MCF 10A (cell line): ENCODE measurements at regions of chr21 and their contacts with region 1.

Region 1: DNA sequence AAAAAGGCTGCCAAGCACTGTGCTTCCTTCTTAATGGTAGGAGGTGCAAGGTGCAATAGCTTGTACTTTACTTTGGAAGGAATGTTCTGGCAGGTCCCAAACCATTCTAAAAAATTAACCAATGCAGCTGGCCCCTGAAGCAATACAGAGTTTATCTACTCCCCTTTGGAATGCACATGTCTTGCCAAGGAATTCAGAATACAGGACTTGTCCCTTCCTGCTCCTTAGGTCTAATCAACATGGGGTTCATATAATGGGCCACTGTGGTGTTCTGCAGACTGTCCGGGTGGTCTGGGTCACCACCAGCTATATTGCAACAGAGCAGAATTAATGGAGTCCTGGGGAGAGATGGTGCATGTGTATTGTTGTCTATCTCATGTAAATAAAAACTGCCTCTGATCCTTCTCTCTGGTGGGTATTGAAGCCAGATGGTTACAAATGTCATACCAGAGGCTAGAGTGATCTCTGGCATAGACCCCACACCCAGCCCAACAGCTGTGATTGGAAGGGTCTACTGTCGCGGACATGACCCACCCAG is 112.8 kb downstream of the RIPK4 start:
- DNase-seq: peak; percentile 74
- H3K4me3 Mint-ChIP-seq: peak overlapping the region; percentile 39
- H3K27ac Mint-ChIP-seq: peak overlapping the region; percentile 64
- H3K4me1 Mint-ChIP-seq: peaks cover 37% of the 10 kb centered on the region
- H3K27me3 Mint-ChIP-seq: no peaks in the 10 kb centered on the region
- CTCF ChIP-seq: no peak

Region 2: GRCh38 chr21:41345934-41346685 is 307.9 kb before region 1 on chr21:
- CTCF ChIA-PET with region 1: no interaction called
- POLR2A ChIA-PET with region 1: no interaction called
- intact Hi-C with region 1: no loop called
- DNase-seq: no peak
- H3K4me3 Mint-ChIP-seq: no peak overlapping the region
- H3K27ac Mint-ChIP-seq: no peak overlapping the region
- H3K4me1 Mint-ChIP-seq: no peaks in the 10 kb centered on the region
- H3K27me3 Mint-ChIP-seq: peaks cover 80% of the 10 kb centered on the region
- CTCF ChIP-seq: no peak

Region 3: DNA sequence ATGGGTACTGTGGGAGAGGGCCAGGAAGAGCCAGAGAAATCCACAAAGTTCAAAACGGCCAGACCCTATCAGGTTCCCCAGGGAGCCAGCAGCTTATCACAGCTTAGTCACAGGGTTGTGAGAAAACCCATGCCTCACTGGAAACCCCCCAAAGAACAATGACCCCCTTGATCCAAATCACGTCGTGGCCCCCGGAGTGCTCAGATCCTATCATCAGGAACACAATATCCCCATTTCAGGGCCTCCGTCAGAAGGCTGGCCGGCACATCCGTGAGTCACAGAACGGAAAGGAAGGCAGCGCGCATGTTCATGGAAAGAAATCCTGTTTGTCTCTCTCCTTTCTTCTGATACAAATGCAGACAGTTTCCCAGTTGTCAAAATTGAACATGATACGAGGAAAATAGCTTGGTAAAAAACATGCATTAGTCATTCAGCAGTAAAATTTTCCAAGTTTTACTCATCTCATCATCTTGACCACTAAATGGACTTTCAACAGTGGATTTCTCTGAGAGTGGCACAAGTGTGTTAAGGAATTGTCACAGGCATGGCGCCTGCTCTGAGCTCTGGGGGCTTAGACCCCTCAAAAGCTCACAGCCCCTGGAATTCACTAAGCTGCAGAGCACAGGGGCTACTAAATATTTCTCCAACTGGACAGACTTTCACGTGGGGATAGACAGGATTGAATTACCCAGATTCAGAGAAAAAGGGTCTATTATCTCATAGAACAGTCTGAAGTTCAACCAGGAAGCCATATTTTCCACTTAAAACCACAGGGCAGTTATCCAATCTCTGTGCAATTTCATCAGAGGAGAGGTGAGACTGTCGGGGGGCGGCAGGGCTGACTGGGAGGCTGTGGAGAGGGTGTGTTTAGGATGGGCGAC is 12.0 kb before region 1 on chr21:
- CTCF ChIA-PET with region 1: no interaction called
- POLR2A ChIA-PET with region 1: interaction called, 19 read pairs
- intact Hi-C with region 1: no loop called
- DNase-seq: peak; percentile 80
- H3K4me3 Mint-ChIP-seq: no peak overlapping the region
- H3K27ac Mint-ChIP-seq: peak overlapping the region; percentile 93
- H3K4me1 Mint-ChIP-seq: peaks cover 50% of the 10 kb centered on the region
- H3K27me3 Mint-ChIP-seq: no peaks in the 10 kb centered on the region
- CTCF ChIP-seq: no peak

Region 4: GRCh38 chr21:42047821-42048613 is 394.0 kb after region 1 on chr21:
- CTCF ChIA-PET with region 1: no interaction called
- POLR2A ChIA-PET with region 1: no interaction called
- intact Hi-C with region 1: no loop called
- DNase-seq: no peak
- H3K4me3 Mint-ChIP-seq: no peak overlapping the region
- H3K27ac Mint-ChIP-seq: no peak overlapping the region
- H3K4me1 Mint-ChIP-seq: no peaks in the 10 kb centered on the region
- H3K27me3 Mint-ChIP-seq: peaks cover 12% of the 10 kb centered on the region
- CTCF ChIP-seq: no peak